K562 (cell line): ENCODE measurements at regions of chr3 and their contacts with region 1.

Region 1: DNA sequence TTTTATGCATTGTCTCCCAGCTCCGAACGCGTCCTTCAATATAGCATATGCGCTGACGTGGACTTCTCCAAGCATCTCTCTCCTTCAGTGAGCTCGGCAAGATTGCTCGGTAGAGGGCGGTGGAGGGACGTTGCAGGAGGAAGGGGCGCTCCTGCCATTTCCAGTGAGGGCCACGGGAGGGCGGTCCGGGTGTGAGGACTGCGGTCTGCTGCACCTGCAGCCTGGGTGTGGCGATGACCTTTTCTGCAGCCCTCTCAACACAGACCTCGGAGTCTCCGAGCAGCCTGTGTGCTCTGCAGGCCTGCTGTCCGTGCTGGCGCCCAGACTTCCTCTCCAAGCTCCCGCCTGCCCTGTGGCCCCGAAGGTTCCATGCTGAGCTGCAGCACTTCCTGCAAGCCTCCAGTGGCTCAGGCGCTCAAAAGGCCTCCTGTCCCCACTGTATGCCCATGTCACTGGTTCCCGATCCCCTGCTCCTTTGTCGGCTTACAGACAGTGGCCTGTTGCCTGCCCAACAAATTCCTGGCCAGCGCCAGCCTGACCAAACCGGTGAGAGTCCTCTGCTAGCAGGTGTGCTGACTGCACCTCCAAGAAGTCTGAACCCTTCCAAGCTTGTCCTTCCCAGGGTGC is 8.9 kb upstream of the RTP3 start:
- DNase-seq: peak; percentile 96 to 98 (median 96)
- ATAC-seq: peak; percentile 93
- H3K4me3 ChIP-seq: no peak overlapping the region
- H3K27ac ChIP-seq: no peak overlapping the region
- H3K4me1 ChIP-seq: peaks cover 31 to 41% of the 10 kb centered on the region in 2 experiments; a peak in 4 of 5 replicates
- H3K27me3 ChIP-seq: no peaks in the 10 kb centered on the region
- CTCF ChIP-seq: peak; percentile 100
- EP300 ChIP-seq: peak; percentile 56; the same call in 1 of the 2 replicates
- POLR2A ChIP-seq: no peak
- RAD21 ChIP-seq: peak; percentile 100

Region 2: GRCh38 chr3:45486136-45486535 is 1002.7 kb before region 1 on chr3:
- CTCF ChIA-PET with region 1: no interaction called
- POLR2A ChIA-PET with region 1: no interaction called
- in situ Hi-C with region 1: no loop called
- intact Hi-C with region 1: no loop called
- DNase-seq: no peak
- ATAC-seq: no peak
- H3K4me3 ChIP-seq: no peak overlapping the region
- H3K27ac ChIP-seq: no peak overlapping the region
- H3K4me1 ChIP-seq: no peaks in the 10 kb centered on the region
- H3K27me3 ChIP-seq: no peaks in the 10 kb centered on the region
- CTCF ChIP-seq: no peak
- EP300 ChIP-seq: no peak
- POLR2A ChIP-seq: no peak
- RAD21 ChIP-seq: no peak

Region 3: GRCh38 chr3:45890405-45890804 is 598.4 kb before region 1 on chr3:
- CTCF ChIA-PET with region 1: no interaction called
- POLR2A ChIA-PET with region 1: no interaction called
- in situ Hi-C with region 1: no loop called
- intact Hi-C with region 1: no loop called
- DNase-seq: peak in 1 of 4 experiments; percentile 37
- ATAC-seq: no peak
- H3K4me3 ChIP-seq: no peak overlapping the region
- H3K27ac ChIP-seq: no peak overlapping the region
- H3K4me1 ChIP-seq: no peaks in the 10 kb centered on the region; a peak in 1 of 5 replicates
- H3K27me3 ChIP-seq: peaks cover 7 to 11% of the 10 kb centered on the region in 2 experiments; a peak in 4 of 5 replicates
- CTCF ChIP-seq: no peak
- EP300 ChIP-seq: no peak
- POLR2A ChIP-seq: no peak
- RAD21 ChIP-seq: no peak

Region 4: GRCh38 chr3:46427916-46428833 is 60.7 kb before region 1 on chr3:
- CTCF ChIA-PET with region 1: interaction called, 4 read pairs
- POLR2A ChIA-PET with region 1: no interaction called
- in situ Hi-C with region 1: no loop called
- intact Hi-C with region 1: loop called (anchors 1 kb)
- DNase-seq: peak in 2 of 4 experiments; percentile 57 to 78
- ATAC-seq: peak; percentile 96
- H3K4me3 ChIP-seq: no peak overlapping the region
- H3K27ac ChIP-seq: no peak overlapping the region
- H3K4me1 ChIP-seq: peaks cover 3 to 16% of the 10 kb centered on the region in 2 experiments; a peak in 4 of 5 replicates
- H3K27me3 ChIP-seq: peaks cover 0 to 4% of the 10 kb centered on the region in 2 experiments; a peak in 2 of 5 replicates
- CTCF ChIP-seq: peak; percentile 39 to 72 (median 51)
- EP300 ChIP-seq: no peak; the same call in 1 of the 2 replicates
- POLR2A ChIP-seq: no peak
- RAD21 ChIP-seq: peak; percentile 74 to 88

Region 5: DNA sequence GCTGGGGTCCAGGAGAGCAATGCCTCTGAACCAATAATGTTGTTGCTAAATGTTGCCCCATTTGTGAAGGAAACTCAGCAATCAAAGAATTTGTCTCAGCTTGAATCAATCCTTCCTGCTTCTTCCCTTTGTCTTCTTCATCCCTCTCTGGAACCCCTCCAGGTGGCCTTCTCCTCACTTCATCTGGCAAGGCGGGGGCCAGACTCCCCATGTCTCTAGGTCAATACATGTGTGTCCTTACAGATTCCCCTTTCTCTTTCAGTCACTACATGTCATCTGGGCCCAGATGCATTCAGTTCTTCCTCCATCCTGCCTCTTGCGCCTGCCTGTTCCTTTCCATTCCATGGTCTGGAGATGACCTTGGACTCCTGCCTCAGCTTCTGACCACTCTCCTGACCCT is 16.1 kb before region 1 on chr3:
- CTCF ChIA-PET with region 1: no interaction called
- POLR2A ChIA-PET with region 1: interaction called, 12 read pairs
- in situ Hi-C with region 1: no loop called
- intact Hi-C with region 1: no loop called
- DNase-seq: no peak
- ATAC-seq: no peak
- H3K4me3 ChIP-seq: no peak overlapping the region
- H3K27ac ChIP-seq: no peak overlapping the region
- H3K4me1 ChIP-seq: no peaks in the 10 kb centered on the region
- H3K27me3 ChIP-seq: peaks cover 5 to 62% of the 10 kb centered on the region in 2 experiments; a peak in 4 of 5 replicates
- CTCF ChIP-seq: no peak
- EP300 ChIP-seq: no peak
- POLR2A ChIP-seq: no peak
- RAD21 ChIP-seq: no peak

Region 6: DNA sequence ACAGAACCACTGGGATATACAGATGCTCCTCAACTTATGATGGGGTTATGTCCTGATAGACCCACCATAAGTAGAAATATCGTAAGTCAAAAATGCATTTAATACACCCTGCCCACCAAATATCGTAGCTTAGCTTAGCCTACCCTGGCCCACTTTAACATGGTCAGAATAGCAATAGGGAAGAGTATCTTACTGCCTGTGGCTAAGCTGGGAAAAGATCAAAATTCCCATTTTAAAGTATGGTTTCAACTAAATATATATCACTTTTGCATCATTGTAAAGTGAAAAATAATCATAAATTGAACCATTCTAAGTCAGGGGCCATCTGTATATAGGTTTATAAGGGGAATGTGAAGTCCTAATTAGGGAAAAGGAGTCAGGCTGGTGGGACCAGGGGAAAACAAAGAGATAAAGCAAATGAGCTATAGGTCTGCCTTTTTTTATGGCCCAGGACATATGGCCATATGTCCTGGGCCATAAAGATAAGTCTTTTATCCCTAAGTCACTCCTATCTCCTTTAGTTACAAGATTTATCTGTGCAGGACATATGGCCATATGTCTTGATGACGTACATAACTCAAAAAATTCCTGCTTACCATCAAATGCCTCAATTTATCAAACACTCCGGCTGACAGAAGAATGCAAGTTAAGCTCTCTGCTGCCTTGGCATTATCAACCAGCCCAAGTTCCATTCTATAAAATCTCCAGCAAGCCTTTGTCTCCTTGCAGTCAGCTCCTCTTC is 20.2 kb after region 1 on chr3:
- CTCF ChIA-PET with region 1: interaction called, 3 read pairs
- POLR2A ChIA-PET with region 1: interaction called, 6 read pairs
- in situ Hi-C with region 1: no loop called
- intact Hi-C with region 1: loop called (anchors 1 kb)
- DNase-seq: peak; percentile 48 to 94 (median 67)
- ATAC-seq: peak; percentile 83
- H3K4me3 ChIP-seq: no peak overlapping the region
- H3K27ac ChIP-seq: peak overlapping the region; percentile 80
- H3K4me1 ChIP-seq: peaks cover 30 to 71% of the 10 kb centered on the region in 2 experiments
- H3K27me3 ChIP-seq: no peaks in the 10 kb centered on the region
- CTCF ChIP-seq: no peak
- EP300 ChIP-seq: peak; percentile 100
- POLR2A ChIP-seq: no peak
- RAD21 ChIP-seq: 0 out of 4 replicates have a peak, but pooled peaks of 1 of the 2 experiments have one; percentile 9

Region 7: DNA sequence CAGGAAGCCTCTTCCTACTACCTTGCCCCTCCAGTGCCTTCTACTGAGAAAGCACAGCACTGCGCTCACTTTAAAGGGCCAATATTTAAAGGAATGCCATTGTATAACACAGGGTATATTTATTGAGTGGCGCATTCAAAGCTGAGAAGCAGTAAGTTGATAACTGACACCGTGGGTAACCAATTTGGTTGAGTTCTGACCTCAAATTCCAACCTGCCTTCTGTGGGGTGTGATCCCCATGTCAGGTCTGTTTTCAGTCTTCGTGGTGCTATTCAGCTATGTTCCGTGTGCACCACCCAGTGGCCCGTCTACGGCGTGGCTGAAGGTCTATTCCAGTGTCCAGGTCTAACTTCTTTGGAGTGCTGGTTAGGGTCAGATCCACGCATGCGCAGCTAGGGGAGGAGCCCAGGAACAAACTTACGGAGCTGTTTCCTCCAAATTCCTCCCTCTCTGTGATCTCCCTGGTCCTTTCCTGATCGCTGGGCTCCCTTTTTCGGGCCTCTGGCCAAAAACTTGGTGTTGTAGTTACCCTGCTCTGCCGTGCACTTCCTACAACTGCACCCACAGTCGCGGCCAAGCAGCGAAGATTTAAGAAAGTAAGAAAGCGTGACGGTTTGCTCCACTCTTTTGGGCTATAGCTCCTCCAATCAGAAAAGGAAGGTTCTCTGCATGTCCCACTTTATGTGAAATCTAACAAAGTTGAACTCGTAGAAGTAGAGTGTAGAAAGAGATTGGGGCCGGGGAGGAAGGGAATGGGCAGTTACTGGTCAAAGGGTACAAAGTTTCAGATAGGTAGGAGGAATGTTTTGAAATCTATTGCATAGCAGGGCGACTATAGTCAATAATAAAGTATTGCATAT is 69.6 kb after region 1 on chr3:
- CTCF ChIA-PET with region 1: interaction called, 177 read pairs
- POLR2A ChIA-PET with region 1: interaction called, 25 read pairs
- in situ Hi-C with region 1: loop called (anchors 5 kb)
- intact Hi-C with region 1: loop called (anchors 1 kb)
- DNase-seq: peak; percentile 95 to 98 (median 98)
- ATAC-seq: peak; percentile 100
- H3K4me3 ChIP-seq: peak overlapping the region; percentile 28
- H3K27ac ChIP-seq: peak overlapping the region; percentile 21; the same call in 2 of the 3 replicates
- H3K4me1 ChIP-seq: peaks cover 11 to 12% of the 10 kb centered on the region in 2 experiments; a peak in 4 of 5 replicates
- H3K27me3 ChIP-seq: no peaks in the 10 kb centered on the region; a peak in 1 of 5 replicates
- CTCF ChIP-seq: peak; percentile 98 to 99 (median 99)
- EP300 ChIP-seq: peak; percentile 40; the same call in 1 of the 2 replicates
- POLR2A ChIP-seq: no peak
- RAD21 ChIP-seq: peak; percentile 100

Region 8: DNA sequence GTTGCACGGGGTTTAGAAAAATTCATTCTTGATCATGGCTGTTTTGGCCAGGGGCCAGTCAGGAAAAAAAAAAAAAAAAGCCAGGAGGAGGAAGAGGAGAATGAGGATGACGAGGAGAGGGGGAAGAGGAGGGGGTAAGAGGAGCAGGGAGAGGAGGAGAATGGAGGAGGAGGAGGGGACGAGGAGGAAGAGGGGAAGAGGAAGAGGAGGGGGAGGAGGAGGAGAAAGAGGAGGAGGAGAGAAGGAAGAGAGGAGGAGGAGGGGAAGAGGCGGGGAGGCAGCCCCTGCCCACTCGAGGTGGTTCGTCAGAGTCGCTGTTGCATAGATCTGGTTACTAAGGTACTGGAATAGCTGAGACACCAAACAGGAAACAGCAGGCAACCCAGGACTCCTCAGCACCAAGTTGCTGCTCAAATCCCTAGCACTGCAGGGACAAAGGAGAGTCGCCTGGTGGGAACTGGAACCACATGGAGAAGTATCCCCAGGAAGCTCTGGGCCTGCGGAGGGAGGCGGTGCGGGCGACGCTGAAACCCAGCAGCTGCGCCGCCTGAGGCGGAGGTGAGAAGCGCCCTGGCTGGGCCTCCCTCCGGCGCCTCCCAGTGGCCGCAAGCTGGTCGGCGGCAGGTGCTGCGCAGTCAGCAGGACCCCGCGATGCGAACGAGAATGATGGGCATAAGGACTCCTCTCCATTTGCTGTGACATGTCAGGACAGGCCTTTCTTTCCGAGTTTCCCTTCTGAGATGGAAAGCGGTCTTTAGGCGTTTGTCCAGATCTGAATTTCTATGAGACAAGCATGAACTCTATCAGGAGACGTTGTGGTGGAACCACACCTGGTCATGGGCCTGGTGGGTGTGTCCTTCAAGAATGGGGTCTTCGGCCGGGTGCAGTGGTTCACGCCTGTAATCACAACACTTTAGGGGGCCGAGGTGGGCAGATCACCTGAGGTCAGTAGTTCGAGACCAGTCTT is 141.0 kb after region 1 on chr3:
- CTCF ChIA-PET with region 1: interaction called, 100 read pairs
- POLR2A ChIA-PET with region 1: interaction called, 3 read pairs
- in situ Hi-C with region 1: loop called (anchors 5 kb)
- intact Hi-C with region 1: loop called (anchors 2 kb)
- DNase-seq: peak; percentile 85 to 88 (median 88)
- ATAC-seq: peak; percentile 100
- H3K4me3 ChIP-seq: no peak overlapping the region
- H3K27ac ChIP-seq: no peak overlapping the region
- H3K4me1 ChIP-seq: peaks cover 4 to 8% of the 10 kb centered on the region in 2 experiments; a peak in 3 of 5 replicates
- H3K27me3 ChIP-seq: peaks cover 10 to 38% of the 10 kb centered on the region in 2 experiments; a peak in 3 of 5 replicates
- CTCF ChIP-seq: peak; percentile 100
- EP300 ChIP-seq: no peak
- POLR2A ChIP-seq: no peak
- RAD21 ChIP-seq: peak; percentile 95 to 96

Region 9: GRCh38 chr3:46634856-46635255 is 146.0 kb after region 1 on chr3:
- CTCF ChIA-PET with region 1: interaction called, 100 read pairs
- POLR2A ChIA-PET with region 1: interaction called, 3 read pairs
- in situ Hi-C with region 1: loop called (anchors 5 kb)
- intact Hi-C with region 1: loop called (anchors 2 kb)
- DNase-seq: no peak
- ATAC-seq: no peak
- H3K4me3 ChIP-seq: no peak overlapping the region
- H3K27ac ChIP-seq: no peak overlapping the region
- H3K4me1 ChIP-seq: peaks cover under 1 to 3% of the 10 kb centered on the region in 2 experiments; a peak in 3 of 5 replicates
- H3K27me3 ChIP-seq: peaks cover 14 to 38% of the 10 kb centered on the region in 2 experiments; a peak in 4 of 5 replicates
- CTCF ChIP-seq: no peak
- EP300 ChIP-seq: no peak
- POLR2A ChIP-seq: no peak
- RAD21 ChIP-seq: no peak